CD4-positive, alpha-beta T cell (primary cell): ENCODE measurements at regions of chr10 and their contacts with region 1.

Region 1: DNA sequence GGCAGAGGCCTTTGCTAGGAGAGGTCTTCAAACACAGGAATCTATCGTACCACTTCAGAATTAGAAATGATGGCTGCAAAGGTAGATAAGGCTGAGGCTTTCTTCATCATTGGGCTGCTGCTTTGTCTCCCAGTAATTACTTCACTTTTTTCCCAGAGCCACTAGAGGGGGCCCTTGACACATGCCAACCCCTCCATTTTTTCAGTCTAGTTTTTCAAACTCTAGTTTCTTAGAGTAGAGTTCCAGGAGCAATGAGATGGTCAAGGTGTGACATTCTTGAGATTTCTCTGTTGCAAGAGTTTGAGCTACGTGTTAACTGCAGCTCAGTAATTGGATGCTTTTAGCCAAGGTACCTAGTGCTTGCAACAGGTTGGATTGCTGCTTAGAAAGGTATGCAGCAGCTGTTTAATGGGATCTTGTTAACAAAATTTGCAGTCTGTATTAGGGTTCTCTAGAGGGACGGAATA is 33.8 kb upstream of the RBM20 start:
- DNase-seq: peak; percentile 13 to 79 (median 34)
- ATAC-seq: peak; percentile 72
- H3K4me3 ChIP-seq: no peak overlapping the region
- H3K4me3 Mint-ChIP-seq: no peak overlapping the region
- H3K27ac ChIP-seq: no peak overlapping the region
- H3K27ac Mint-ChIP-seq: no peak overlapping the region
- H3K4me1 ChIP-seq: no peaks in the 10 kb centered on the region
- H3K4me1 Mint-ChIP-seq: no peaks in the 10 kb centered on the region
- H3K27me3 ChIP-seq: no peaks in the 10 kb centered on the region
- H3K27me3 Mint-ChIP-seq: no peaks in the 10 kb centered on the region
- CTCF ChIP-seq: peak; percentile 93

Region 2: DNA sequence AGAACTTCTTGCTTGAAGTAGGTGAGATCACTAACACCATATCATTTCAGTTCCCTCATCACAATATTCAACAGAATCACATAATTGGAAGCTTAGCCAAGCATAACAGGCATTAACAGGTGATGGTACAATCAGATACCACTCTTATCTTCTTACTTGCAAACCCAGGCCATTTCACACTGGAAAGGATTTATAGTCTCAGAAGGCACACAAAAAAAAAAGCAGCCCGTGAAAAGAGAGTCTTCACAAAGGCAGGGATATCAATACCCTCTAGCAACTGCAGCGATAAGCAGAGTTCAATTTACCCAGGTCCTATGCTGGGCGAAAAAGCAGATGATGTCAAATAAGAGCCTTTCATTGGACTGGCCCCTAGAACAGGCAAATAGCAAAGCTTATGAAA is 1769.4 kb before region 1 on chr10:
- CTCF ChIA-PET with region 1: no interaction called
- POLR2A ChIA-PET with region 1: no interaction called
- intact Hi-C with region 1: no loop called
- DNase-seq: no peak
- ATAC-seq: no peak
- H3K4me3 ChIP-seq: no peak overlapping the region
- H3K4me3 Mint-ChIP-seq: no peak overlapping the region
- H3K27ac ChIP-seq: no peak overlapping the region
- H3K27ac Mint-ChIP-seq: no peak overlapping the region
- H3K4me1 ChIP-seq: no peaks in the 10 kb centered on the region
- H3K4me1 Mint-ChIP-seq: no peaks in the 10 kb centered on the region
- H3K27me3 ChIP-seq: no peaks in the 10 kb centered on the region
- H3K27me3 Mint-ChIP-seq: no peaks in the 10 kb centered on the region
- CTCF ChIP-seq: no peak

Region 3: GRCh38 chr10:110681023-110681681 is 70.8 kb after region 1 on chr10:
- CTCF ChIA-PET with region 1: no interaction called
- POLR2A ChIA-PET with region 1: no interaction called
- intact Hi-C with region 1: no loop called
- DNase-seq: peak in 6 of 14 experiments; percentile 5 to 51 (median 22)
- ATAC-seq: no peak
- H3K4me3 ChIP-seq: no peak overlapping the region
- H3K4me3 Mint-ChIP-seq: no peak overlapping the region
- H3K27ac ChIP-seq: no peak overlapping the region
- H3K27ac Mint-ChIP-seq: no peak overlapping the region
- H3K4me1 ChIP-seq: no peaks in the 10 kb centered on the region
- H3K4me1 Mint-ChIP-seq: no peaks in the 10 kb centered on the region
- H3K27me3 ChIP-seq: no peaks in the 10 kb centered on the region
- H3K27me3 Mint-ChIP-seq: peaks cover 4% of the 10 kb centered on the region
- CTCF ChIP-seq: peak; percentile 24

Region 4: GRCh38 chr10:110746254-110746826 is 136.0 kb after region 1 on chr10:
- CTCF ChIA-PET with region 1: no interaction called
- POLR2A ChIA-PET with region 1: no interaction called
- intact Hi-C with region 1: loop called (anchors 2 to 10 kb)
- DNase-seq: peak in 13 of 14 experiments; percentile 12 to 77 (median 45)
- ATAC-seq: peak; percentile 19
- H3K4me3 ChIP-seq: no peak overlapping the region
- H3K4me3 Mint-ChIP-seq: no peak overlapping the region
- H3K27ac ChIP-seq: no peak overlapping the region
- H3K27ac Mint-ChIP-seq: peak overlapping the region; percentile 68
- H3K4me1 ChIP-seq: peaks cover 39% of the 10 kb centered on the region
- H3K4me1 Mint-ChIP-seq: peaks cover 89% of the 10 kb centered on the region
- H3K27me3 ChIP-seq: no peaks in the 10 kb centered on the region
- H3K27me3 Mint-ChIP-seq: no peaks in the 10 kb centered on the region
- CTCF ChIP-seq: peak; percentile 91

Region 5: GRCh38 chr10:110993024-110993693 is 382.8 kb after region 1 on chr10:
- CTCF ChIA-PET with region 1: no interaction called
- POLR2A ChIA-PET with region 1: no interaction called
- intact Hi-C with region 1: loop called in 1 of 2 experiments (anchors 5 kb)
- DNase-seq: peak in 6 of 14 experiments; percentile 3 to 67 (median 38)
- ATAC-seq: peak; percentile 96
- H3K4me3 ChIP-seq: no peak overlapping the region
- H3K4me3 Mint-ChIP-seq: peak overlapping the region; percentile 55
- H3K27ac ChIP-seq: no peak overlapping the region
- H3K27ac Mint-ChIP-seq: peak overlapping the region; percentile 65
- H3K4me1 ChIP-seq: peaks cover 6% of the 10 kb centered on the region
- H3K4me1 Mint-ChIP-seq: peaks cover 61% of the 10 kb centered on the region
- H3K27me3 ChIP-seq: no peaks in the 10 kb centered on the region
- H3K27me3 Mint-ChIP-seq: no peaks in the 10 kb centered on the region
- CTCF ChIP-seq: no peak

Region 6: DNA sequence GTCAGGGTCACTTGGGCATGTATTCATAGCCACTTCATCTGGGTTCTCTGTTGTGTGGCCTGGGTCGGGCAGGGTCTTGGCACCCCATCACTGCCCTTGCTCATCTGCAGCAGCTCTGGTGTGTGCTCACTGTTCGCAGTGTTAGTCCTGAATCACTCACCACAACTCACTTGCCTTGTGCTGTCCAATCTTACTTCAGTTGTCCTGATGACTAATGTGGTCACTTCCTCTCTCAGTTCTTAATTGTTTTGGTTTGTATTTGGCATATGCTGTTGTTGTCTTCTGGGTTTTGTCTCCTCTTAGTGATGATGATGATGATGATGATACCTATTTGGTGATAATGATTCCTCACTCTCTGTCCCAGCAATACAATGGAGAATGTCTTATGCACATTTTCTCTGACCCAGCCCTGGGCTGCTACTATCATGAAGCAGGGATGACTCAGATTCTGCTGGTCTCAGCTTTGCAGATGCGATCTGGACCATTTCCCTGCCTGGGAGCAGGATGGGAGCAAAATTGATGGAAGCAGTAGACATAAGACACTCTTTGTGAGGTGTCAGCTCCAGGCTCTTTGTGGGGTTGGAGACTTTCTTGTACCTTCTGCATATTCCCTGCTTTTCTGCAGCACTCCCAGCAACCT is 483.5 kb after region 1 on chr10:
- CTCF ChIA-PET with region 1: no interaction called
- POLR2A ChIA-PET with region 1: no interaction called
- intact Hi-C with region 1: loop called in 1 of 2 experiments (anchors 2 kb)
- DNase-seq: no peak
- ATAC-seq: no peak
- H3K4me3 ChIP-seq: no peak overlapping the region
- H3K4me3 Mint-ChIP-seq: no peak overlapping the region
- H3K27ac ChIP-seq: no peak overlapping the region
- H3K27ac Mint-ChIP-seq: no peak overlapping the region
- H3K4me1 ChIP-seq: no peaks in the 10 kb centered on the region
- H3K4me1 Mint-ChIP-seq: no peaks in the 10 kb centered on the region
- H3K27me3 ChIP-seq: peaks cover 0 to 5% of the 10 kb centered on the region in 2 experiments
- H3K27me3 Mint-ChIP-seq: peaks cover 23% of the 10 kb centered on the region
- CTCF ChIP-seq: no peak

Region 7: DNA sequence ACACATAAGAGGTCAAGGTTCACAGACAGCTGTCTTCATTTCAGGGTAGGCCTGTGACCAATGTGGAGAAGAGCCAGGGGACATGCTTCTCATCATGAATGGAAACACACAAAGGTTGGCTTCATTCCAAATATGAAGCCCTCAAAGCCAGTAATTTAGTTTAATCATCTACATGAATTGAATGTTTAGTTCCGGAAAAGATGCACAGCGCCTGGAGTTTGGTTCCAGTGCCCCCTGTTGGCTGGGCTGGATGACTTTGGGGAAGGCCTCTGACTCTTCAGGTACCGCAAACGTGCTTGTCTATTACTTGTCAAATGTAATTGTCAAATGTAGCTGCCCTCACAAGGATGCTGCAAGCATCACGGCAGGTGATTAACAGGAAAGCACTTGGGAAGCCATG is 597.2 kb after region 1 on chr10:
- CTCF ChIA-PET with region 1: no interaction called
- POLR2A ChIA-PET with region 1: no interaction called
- intact Hi-C with region 1: loop called in 1 of 2 experiments (anchors 5 kb)
- DNase-seq: peak in 6 of 14 experiments; percentile 2 to 33 (median 17)
- ATAC-seq: no peak
- H3K4me3 ChIP-seq: no peak overlapping the region
- H3K4me3 Mint-ChIP-seq: no peak overlapping the region
- H3K27ac ChIP-seq: no peak overlapping the region
- H3K27ac Mint-ChIP-seq: no peak overlapping the region
- H3K4me1 ChIP-seq: no peaks in the 10 kb centered on the region
- H3K4me1 Mint-ChIP-seq: no peaks in the 10 kb centered on the region
- H3K27me3 ChIP-seq: peaks cover 2 to 4% of the 10 kb centered on the region in 2 experiments
- H3K27me3 Mint-ChIP-seq: no peaks in the 10 kb centered on the region
- CTCF ChIP-seq: no peak

Region 8: DNA sequence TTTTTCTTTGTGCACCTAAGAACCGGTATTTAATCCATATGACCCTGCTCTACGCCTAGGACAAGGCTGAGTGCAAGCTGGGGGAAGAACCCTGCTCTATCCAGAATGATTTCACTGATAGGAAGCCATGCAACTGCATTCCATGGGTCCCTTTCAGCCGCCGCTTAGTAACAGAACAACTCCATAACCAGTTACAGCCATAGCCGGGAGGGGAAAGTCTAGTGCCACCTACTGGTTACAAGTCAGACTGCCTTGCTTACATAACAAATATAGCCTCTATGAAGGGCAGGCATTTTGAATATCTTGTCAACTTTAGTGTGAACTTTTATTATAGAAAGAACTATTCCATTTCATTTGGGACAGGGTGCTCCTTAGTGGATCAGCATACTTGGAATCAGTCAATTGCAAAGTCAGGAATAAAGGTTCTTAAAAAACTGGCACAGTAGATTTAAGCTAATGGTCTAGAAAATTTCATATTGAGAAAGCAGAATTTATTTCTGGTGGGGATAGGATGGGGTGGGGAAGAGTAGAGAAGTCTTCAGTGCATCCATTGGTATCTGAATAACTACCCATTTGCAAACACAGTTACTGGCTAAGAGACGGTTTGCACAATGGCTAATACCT is 988.2 kb after region 1 on chr10:
- CTCF ChIA-PET with region 1: interaction called, 6 read pairs
- POLR2A ChIA-PET with region 1: no interaction called
- intact Hi-C with region 1: loop called (anchors 2 to 5 kb)
- DNase-seq: peak in 12 of 14 experiments; percentile 1 to 66 (median 12)
- ATAC-seq: peak; percentile 49
- H3K4me3 ChIP-seq: no peak overlapping the region
- H3K4me3 Mint-ChIP-seq: no peak overlapping the region
- H3K27ac ChIP-seq: no peak overlapping the region
- H3K27ac Mint-ChIP-seq: no peak overlapping the region
- H3K4me1 ChIP-seq: no peaks in the 10 kb centered on the region
- H3K4me1 Mint-ChIP-seq: no peaks in the 10 kb centered on the region
- H3K27me3 ChIP-seq: peaks cover 0 to 9% of the 10 kb centered on the region in 2 experiments
- H3K27me3 Mint-ChIP-seq: peaks cover 1% of the 10 kb centered on the region
- CTCF ChIP-seq: peak; percentile 65

Region 9: DNA sequence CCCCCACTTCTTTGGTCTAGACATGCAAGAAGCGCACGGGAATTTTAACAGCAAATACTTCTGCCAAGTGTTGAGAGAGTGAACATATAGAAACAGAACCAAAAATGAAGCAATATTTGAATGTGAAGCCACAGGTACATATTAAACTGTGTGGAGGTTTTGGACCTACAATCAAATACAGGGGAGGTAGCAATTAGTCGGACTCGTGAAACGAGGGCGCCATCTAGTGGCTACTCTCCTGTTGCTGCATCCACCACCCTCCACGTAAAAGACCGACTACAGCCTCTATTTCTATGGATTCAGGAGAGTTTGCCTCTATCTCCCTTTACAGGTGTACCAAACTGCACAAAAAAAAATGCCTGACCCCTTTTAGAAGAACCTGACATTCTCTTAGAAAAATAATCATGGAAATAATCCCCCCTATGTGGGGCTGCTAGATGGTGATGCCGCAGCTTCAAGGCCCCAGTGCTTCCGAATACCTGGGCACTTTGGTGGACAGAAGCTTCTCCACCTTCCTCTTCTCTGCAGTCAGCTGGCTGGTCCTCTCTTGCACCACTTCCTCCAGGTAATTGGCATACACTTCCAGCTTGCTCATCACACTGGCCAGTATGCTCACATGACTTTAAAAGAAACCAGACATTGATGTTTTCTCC is 1704.6 kb after region 1 on chr10:
- CTCF ChIA-PET with region 1: no interaction called
- POLR2A ChIA-PET with region 1: no interaction called
- intact Hi-C with region 1: loop called (anchors 5 to 10 kb)
- DNase-seq: peak; percentile 52 to 84 (median 64)
- ATAC-seq: peak; percentile 61
- H3K4me3 ChIP-seq: no peak overlapping the region
- H3K4me3 Mint-ChIP-seq: no peak overlapping the region
- H3K27ac ChIP-seq: no peak overlapping the region
- H3K27ac Mint-ChIP-seq: no peak overlapping the region
- H3K4me1 ChIP-seq: peaks cover 2% of the 10 kb centered on the region
- H3K4me1 Mint-ChIP-seq: no peaks in the 10 kb centered on the region
- H3K27me3 ChIP-seq: peaks cover 0 to 16% of the 10 kb centered on the region in 2 experiments
- H3K27me3 Mint-ChIP-seq: peaks cover 40% of the 10 kb centered on the region
- CTCF ChIP-seq: peak; percentile 82